Cardiac septum (tissue), 1 donor: ENCODE measurements at regions of chr1 and their contacts with region 1.

Region 1: GRCh38 chr1:3746830-3747521 is 5.3 kb upstream of the CCDC27 start:
- DNase-seq: peak; percentile 93

Region 2: GRCh38 chr1:3796215-3797061 is 49.5 kb after region 1 on chr1 and contains the start of gene LRRC47:
- intact Hi-C with region 1: loop called (anchors 2 kb)
- DNase-seq: peak; percentile 98
- total RNA-seq, gene LRRC47: 63.1 TPM